CD4-positive, alpha-beta memory T cell (primary cell): ENCODE measurements at regions of chr17 and their contacts with region 1.

Region 1: GRCh38 chr17:73657473-73658116 is 13.3 kb upstream of the SDK2 start:
- DNase-seq: no peak
- H3K4me3 ChIP-seq: no peak overlapping the region
- H3K4me3 Mint-ChIP-seq: peak overlapping the region in 2 of 8 donors; percentile 1 to 46
- H3K27ac ChIP-seq: no peak overlapping the region
- H3K27ac Mint-ChIP-seq: peak overlapping the region in 1 of 7 donors; percentile 12
- H3K4me1 ChIP-seq: no peaks in the 10 kb centered on the region
- H3K4me1 Mint-ChIP-seq: peaks cover 0 to 5% (median 3%) of the 10 kb centered on the region in 4 donors
- H3K27me3 ChIP-seq: no peaks in the 10 kb centered on the region
- H3K27me3 Mint-ChIP-seq: peaks cover 4 to 5% of the 10 kb centered on the region in 2 donors

Region 2: GRCh38 chr17:73325527-73325842 is 332.1 kb before region 1 on chr17:
- CTCF ChIA-PET with region 1: no interaction called
- POLR2A ChIA-PET with region 1: no interaction called
- intact Hi-C with region 1: no loop called
- DNase-seq: no peak
- H3K4me3 ChIP-seq: no peak overlapping the region
- H3K4me3 Mint-ChIP-seq: no peak overlapping the region
- H3K27ac ChIP-seq: no peak overlapping the region
- H3K27ac Mint-ChIP-seq: no peak overlapping the region
- H3K4me1 ChIP-seq: no peaks in the 10 kb centered on the region
- H3K4me1 Mint-ChIP-seq: no peaks in the 10 kb centered on the region
- H3K27me3 ChIP-seq: no peaks in the 10 kb centered on the region
- H3K27me3 Mint-ChIP-seq: peaks cover 8 to 10% of the 10 kb centered on the region in 2 donors

Region 3: GRCh38 chr17:73841431-73842060 is 184.0 kb after region 1 on chr17:
- CTCF ChIA-PET with region 1: interaction called, 3 read pairs
- POLR2A ChIA-PET with region 1: no interaction called
- intact Hi-C with region 1: loop called (anchors 1 kb)
- DNase-seq: no peak
- H3K4me3 ChIP-seq: no peak overlapping the region
- H3K4me3 Mint-ChIP-seq: no peak overlapping the region
- H3K27ac ChIP-seq: no peak overlapping the region
- H3K27ac Mint-ChIP-seq: peak overlapping the region in 4 of 7 donors; percentile 11 to 80 (median 69)
- H3K4me1 ChIP-seq: no peaks in the 10 kb centered on the region
- H3K4me1 Mint-ChIP-seq: peaks cover 5 to 8% (median 7%) of the 10 kb centered on the region in 4 donors
- H3K27me3 ChIP-seq: no peaks in the 10 kb centered on the region
- H3K27me3 Mint-ChIP-seq: peaks cover 0 to 5% of the 10 kb centered on the region in 2 donors

Region 4: GRCh38 chr17:74176546-74177001 is 519.0 kb after region 1 on chr17:
- CTCF ChIA-PET with region 1: no interaction called
- POLR2A ChIA-PET with region 1: no interaction called
- intact Hi-C with region 1: loop called (anchors 5 kb)
- DNase-seq: peak in 4 of 5 donors; percentile 13 to 20 (median 18)
- H3K4me3 ChIP-seq: no peak overlapping the region
- H3K4me3 Mint-ChIP-seq: no peak overlapping the region
- H3K27ac ChIP-seq: no peak overlapping the region
- H3K27ac Mint-ChIP-seq: no peak overlapping the region
- H3K4me1 ChIP-seq: no peaks in the 10 kb centered on the region
- H3K4me1 Mint-ChIP-seq: no peaks in the 10 kb centered on the region
- H3K27me3 ChIP-seq: peaks cover 4% of the 10 kb centered on the region
- H3K27me3 Mint-ChIP-seq: peaks cover 21 to 41% of the 10 kb centered on the region in 2 donors